ENCODE measurements at regions of chr7 and their contacts with region 1.

Region 1: DNA sequence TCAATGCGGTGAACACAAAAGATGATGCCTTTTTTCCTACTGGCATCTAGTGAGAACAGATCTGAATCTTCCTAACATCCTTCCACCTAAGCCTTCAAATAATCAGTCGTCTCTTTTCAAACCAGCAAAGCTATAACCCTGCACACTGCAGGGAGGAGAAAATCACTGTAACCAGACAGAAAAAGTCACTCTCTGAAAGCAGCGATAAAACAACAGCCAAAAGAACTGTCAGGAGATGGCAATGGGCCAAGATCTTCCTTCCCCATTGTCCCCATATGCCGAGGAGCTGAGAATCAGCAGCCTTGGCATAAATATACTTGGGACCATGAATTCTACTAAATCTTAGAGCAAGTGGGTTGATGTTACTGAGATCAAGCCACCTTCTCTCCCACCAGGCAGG is 13.1 kb downstream of the FZD9 start:
- DNase-seq: no peak
- ATAC-seq: no peak
- H3K4me3 ChIP-seq: no peak overlapping the region
- H3K27ac ChIP-seq: no peak overlapping the region
- H3K4me1 ChIP-seq: no peaks in the 10 kb centered on the region
- H3K27me3 ChIP-seq: no peaks in the 10 kb centered on the region
- CTCF ChIP-seq: no peak

Region 2: GRCh38 chr7:73312831-73313526 is 133.7 kb before region 1 on chr7:
- intact Hi-C with region 1: no loop called
- DNase-seq: peak in 1 of 6 donors; percentile 76
- ATAC-seq: no peak
- H3K4me3 ChIP-seq: no peak overlapping the region
- H3K27ac ChIP-seq: no peak overlapping the region
- H3K4me1 ChIP-seq: peaks cover 0 to 5% (median 0%) of the 10 kb centered on the region in 3 donors
- H3K27me3 ChIP-seq: no peaks in the 10 kb centered on the region
- CTCF ChIP-seq: no peak

Region 3: DNA sequence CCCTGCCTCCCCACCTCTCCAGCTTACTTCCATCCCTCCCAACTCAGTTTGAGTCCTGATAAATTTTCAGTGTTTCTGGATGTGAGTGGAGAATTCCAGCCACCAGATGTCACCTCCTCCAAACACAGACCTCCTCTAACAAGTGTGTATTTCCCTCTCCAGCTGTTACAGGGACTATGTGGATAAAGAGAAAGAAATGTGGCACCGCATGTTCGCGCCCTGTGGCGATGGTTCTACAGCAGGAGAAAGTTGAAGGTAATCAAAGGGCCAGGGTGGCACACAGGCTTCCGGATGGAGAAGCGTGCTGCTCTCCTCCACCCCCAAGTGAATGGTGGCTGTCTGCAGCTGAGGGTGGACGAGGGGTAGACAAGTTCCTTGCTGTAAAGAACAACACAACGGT is 104.0 kb before region 1 on chr7:
- intact Hi-C with region 1: loop called in 1 of 3 experiments (anchors 10 kb)
- DNase-seq: peak in 3 of 6 donors; percentile 33 to 52 (median 34)
- ATAC-seq: peak; percentile 87 to 98 (median 92)
- H3K4me3 ChIP-seq: peak overlapping the region in 1 of 4 donors; percentile 7
- H3K27ac ChIP-seq: no peak overlapping the region
- H3K4me1 ChIP-seq: no peaks in the 10 kb centered on the region
- H3K27me3 ChIP-seq: no peaks in the 10 kb centered on the region
- CTCF ChIP-seq: peak in 3 of 4 donors; percentile 18 to 43 (median 25)

Measured in pancreas (tissue), 10 donors.